Breast epithelium (tissue), 4 donors: ENCODE measurements at regions of chr17 and their contacts with region 1.

Region 1: GRCh38 chr17:35991075-35991474 is 4.5 kb upstream of the CCL14 start:
- DNase-seq: no peak
- H3K4me3 ChIP-seq: no peak overlapping the region
- H3K27ac ChIP-seq: no peak overlapping the region
- H3K4me1 ChIP-seq: no peaks in the 10 kb centered on the region
- H3K27me3 ChIP-seq: no peaks in the 10 kb centered on the region
- CTCF ChIP-seq: no peak
- POLR2A ChIP-seq: no peak

Region 2: DNA sequence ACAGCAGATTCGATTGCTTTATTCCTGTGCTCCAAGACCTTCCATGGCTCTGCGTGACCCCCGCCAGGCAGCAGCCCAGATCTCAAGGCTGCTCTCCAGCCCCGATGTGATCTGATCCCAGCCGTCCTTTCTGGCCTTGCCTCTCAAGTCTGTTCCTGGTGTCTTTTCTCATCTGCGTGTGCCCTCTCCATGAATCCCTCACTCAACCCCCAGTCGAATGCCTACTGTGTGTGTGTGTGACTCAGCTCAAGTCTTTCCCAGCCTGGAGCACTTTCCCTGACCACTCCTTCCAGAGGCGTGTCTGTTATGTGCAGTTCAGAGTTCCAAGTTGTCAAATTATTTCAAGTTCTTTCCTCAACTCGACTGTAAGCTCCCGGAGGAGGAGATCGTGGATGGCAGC is 674.3 kb after region 1 on chr17:
- intact Hi-C with region 1: loop called (anchors 5 kb)
- DNase-seq: no peak
- H3K4me3 ChIP-seq: no peak overlapping the region
- H3K27ac ChIP-seq: no peak overlapping the region
- H3K4me1 ChIP-seq: no peaks in the 10 kb centered on the region
- H3K27me3 ChIP-seq: peaks cover 0 to 15% of the 10 kb centered on the region in 2 donors
- CTCF ChIP-seq: no peak
- POLR2A ChIP-seq: no peak